ENCODE measurements at regions of chr4 and their contacts with region 1.

Region 1: DNA sequence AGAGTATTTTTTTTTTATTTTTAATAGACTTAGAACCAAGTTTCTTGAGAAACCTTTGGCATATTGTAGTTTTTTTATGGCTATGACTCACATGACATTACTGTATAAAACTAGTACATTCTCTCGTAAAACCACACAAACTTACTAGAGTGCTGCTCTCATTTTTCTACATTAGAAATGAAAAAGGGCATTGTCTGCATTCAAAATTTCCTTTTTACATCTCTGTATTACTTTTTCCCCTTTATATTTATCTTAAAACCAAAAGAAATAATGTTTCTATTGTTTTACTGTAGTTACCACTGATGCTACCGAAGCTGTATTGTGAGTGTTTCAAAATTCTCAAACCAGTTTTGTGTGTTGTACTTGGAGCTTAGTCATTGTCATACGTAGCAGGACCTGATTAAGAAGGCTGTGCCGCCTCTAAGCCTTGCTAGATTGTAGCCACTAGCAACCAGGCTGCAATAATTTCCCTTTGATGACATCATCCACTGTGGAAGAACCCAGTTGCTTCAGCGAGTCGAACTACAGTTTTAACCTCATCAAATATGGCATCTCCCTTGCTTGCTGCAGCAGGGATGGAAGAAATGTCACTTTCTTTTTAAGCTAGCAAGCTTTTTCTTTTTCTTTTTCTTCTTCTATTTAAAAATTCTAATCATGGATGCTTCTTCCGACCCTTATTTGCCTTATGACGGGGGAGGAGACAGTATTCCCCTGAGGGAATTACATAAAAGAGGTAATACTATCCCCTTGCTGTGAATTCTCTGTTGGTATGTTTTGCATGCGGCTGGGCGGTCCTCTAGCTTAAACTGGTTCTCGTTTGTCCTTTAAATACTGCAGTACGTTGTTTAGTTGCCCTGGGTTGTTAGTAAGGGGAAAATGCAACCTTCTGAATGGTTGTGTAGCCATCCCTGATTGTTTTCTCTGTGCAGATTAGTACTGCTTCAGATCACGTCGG is 39.6 kb downstream of the CLCN3 start:
- DNase-seq: peak; percentile 76
- H3K4me3 Mint-ChIP-seq: peak overlapping the region; percentile 85
- H3K27ac Mint-ChIP-seq: peak overlapping the region; percentile 100
- H3K4me1 Mint-ChIP-seq: peaks cover 15% of the 10 kb centered on the region
- H3K27me3 Mint-ChIP-seq: no peaks in the 10 kb centered on the region
- CTCF ChIP-seq: no peak

Region 2: GRCh38 chr4:169619959-169620879 is 39.8 kb before region 1 on chr4 and contains the start of gene CLCN3:
- CTCF ChIA-PET with region 1: interaction called, 3 read pairs
- intact Hi-C with region 1: loop called (anchors 2 kb)
- DNase-seq: peak; percentile 94
- H3K4me3 Mint-ChIP-seq: peak within 1 kb of the TSS; percentile 87
- H3K27ac Mint-ChIP-seq: peak within 1 kb of the TSS; percentile 97
- H3K4me1 Mint-ChIP-seq: peaks cover 7% of the 10 kb centered on the region
- H3K27me3 Mint-ChIP-seq: no peaks in the 10 kb centered on the region
- CTCF ChIP-seq: no peak
- total RNA-seq, gene CLCN3: 55.7 and 57.8 TPM in 2 replicates

Region 3: DNA sequence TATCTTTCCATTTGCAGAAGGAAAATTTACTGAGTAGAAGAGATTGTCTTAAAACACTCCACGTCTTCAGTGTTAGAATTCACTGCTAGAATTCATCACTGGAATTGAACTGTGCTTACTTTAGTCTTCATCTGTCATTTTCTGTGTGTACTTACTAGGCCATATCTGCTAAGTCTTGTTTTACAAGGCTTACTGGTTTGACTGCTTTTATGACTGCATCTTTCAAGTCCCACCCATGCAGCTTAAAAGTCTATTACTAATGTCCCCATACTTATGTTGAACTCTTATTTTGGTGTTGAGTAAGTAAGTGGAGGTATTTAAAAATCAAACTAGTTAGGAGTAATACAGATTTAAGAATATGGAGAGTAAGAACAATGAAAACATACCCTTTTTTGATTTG is 25.0 kb before region 1 on chr4:
- CTCF ChIA-PET with region 1: no interaction called
- intact Hi-C with region 1: loop called (anchors 2 kb)
- DNase-seq: no peak
- H3K4me3 Mint-ChIP-seq: no peak overlapping the region
- H3K27ac Mint-ChIP-seq: peak overlapping the region; percentile 46
- H3K4me1 Mint-ChIP-seq: peaks cover 26% of the 10 kb centered on the region
- H3K27me3 Mint-ChIP-seq: no peaks in the 10 kb centered on the region
- CTCF ChIP-seq: no peak

Region 4: GRCh38 chr4:169649545-169650226 is 10.3 kb before region 1 on chr4:
- CTCF ChIA-PET with region 1: interaction called, 12 read pairs
- intact Hi-C with region 1: no loop called
- DNase-seq: no peak
- H3K4me3 Mint-ChIP-seq: no peak overlapping the region
- H3K27ac Mint-ChIP-seq: peak overlapping the region; percentile 11
- H3K4me1 Mint-ChIP-seq: peaks cover 12% of the 10 kb centered on the region
- H3K27me3 Mint-ChIP-seq: no peaks in the 10 kb centered on the region
- CTCF ChIP-seq: no peak

Measured in Calu3 (cell line).